HepG2 (cell line): ENCODE measurements at regions of chr20 and their contacts with region 1.

Region 1: DNA sequence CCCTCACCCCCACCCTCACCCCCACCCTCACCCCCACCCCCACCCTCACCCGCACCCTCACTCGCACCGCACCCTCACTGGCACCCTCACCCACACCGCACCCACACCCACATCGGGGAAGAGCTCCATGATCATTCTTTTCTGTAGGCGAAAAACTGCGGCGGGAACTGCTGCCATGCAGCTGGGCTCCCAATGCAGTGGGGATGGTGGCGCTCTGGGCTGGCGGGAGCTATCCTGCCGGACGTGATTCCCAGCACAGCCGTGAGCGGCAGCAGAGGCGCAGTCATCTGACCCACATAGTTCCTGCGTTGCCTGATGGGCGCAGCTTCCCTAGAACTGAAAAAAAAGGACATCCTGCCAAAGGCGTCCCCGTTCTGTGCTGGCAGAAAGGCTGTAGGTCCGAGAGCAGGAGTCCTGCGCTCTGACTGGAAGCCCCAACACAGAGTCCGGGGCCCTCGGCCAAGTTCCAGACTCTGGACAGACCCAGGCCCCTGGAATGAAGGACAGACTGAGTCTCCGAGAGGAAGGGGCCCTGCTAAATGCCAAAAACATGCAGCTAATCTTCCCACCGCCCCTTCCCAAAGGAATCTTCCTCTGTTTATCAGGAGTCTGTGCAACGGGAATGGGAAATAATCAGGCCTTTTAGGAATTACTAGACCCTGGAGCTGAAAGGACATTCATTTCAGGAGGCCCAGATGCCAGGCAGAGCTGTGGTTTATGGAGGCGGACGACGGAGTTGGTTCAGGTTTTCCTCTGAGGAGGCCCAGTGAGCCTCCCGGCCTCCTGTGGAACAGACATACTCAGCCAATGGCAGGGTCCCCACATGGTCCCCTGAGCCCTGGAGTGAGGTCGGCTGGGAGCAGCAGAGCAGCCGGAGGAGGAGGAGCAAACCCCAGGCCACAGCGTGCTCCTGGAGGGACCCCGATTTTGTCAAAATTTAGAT is 14.1 kb upstream of the TCFL5 start:
- DNase-seq: peak; percentile 92
- ATAC-seq: peak; percentile 85
- H3K4me3 ChIP-seq: peak overlapping the region; percentile 8 to 53 (median 13); a peak in 5 of 6 replicates
- H3K27ac ChIP-seq: peak overlapping the region; percentile 48
- H3K4me1 ChIP-seq: peaks cover 67% of the 10 kb centered on the region
- H3K27me3 ChIP-seq: peaks cover 0 to 6% of the 10 kb centered on the region in 2 experiments; a peak in 2 of 5 replicates
- CTCF ChIP-seq: peak; percentile 92
- EP300 ChIP-seq: peak in 1 of 2 experiments; percentile 57; a peak in 1 of 4 replicates
- POLR2A ChIP-seq: peak in 1 of 2 experiments; percentile 59; a peak in 2 of 4 replicates
- RAD21 ChIP-seq: peak; percentile 82

Region 2: DNA sequence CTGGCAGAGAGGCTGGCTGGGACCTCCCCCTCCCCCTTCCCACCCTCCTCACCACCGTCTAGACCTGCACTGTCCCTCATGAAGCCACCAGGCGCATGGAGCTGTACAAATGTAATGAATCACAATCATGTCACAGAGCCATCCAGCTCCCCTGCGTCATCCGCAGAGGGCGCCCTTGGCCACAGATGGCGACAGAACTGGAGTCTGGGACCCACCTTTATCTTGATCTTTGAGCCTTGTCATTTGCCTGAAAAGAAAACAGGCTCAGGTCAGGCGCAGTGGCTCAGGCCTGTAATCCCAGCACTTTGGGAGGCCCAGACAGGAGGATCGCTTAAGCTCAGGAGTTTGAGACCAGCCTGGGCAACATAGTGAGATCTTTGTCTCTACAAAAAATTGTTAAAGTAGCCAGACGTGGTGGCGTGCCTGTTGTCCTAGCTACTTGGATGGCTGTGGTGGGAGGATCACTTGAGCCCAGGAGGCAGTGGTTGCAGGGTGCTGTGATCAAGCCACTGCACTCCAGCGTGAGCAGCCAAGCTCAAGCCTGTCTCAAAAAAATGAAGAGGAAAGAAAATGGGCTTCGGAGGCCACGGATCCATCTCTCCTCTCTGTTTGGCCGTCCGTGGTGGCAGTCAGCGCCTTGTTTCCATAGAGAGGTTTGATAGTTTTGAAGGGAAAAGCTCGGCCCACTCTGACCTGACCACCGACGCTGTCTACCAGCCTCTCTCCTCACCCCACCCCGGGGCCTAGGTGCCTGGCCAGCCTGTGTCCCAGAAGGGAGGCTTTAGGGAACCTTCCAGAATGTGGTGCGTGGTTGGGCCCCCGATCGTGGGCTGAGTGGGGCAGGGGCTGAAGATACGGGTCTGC is 52.7 kb before region 1 on chr20:
- CTCF ChIA-PET with region 1: no interaction called
- POLR2A ChIA-PET with region 1: interaction called, 10 read pairs
- in situ Hi-C with region 1: no loop called
- intact Hi-C with region 1: loop called (anchors 1 kb)
- DNase-seq: peak; percentile 98
- ATAC-seq: peak; percentile 61
- H3K4me3 ChIP-seq: peak overlapping the region in 1 of 3 experiments; percentile 71; a peak in 1 of 6 replicates
- H3K27ac ChIP-seq: peak overlapping the region; percentile 59
- H3K4me1 ChIP-seq: peaks cover 68% of the 10 kb centered on the region
- H3K27me3 ChIP-seq: no peaks in the 10 kb centered on the region
- CTCF ChIP-seq: peak; percentile 99
- EP300 ChIP-seq: peak; percentile 18 to 69; a peak in 3 of 4 replicates
- POLR2A ChIP-seq: 0 out of 4 replicates have a peak, but pooled peaks have one; percentile 3 to 35
- RAD21 ChIP-seq: peak; percentile 98

Region 3: DNA sequence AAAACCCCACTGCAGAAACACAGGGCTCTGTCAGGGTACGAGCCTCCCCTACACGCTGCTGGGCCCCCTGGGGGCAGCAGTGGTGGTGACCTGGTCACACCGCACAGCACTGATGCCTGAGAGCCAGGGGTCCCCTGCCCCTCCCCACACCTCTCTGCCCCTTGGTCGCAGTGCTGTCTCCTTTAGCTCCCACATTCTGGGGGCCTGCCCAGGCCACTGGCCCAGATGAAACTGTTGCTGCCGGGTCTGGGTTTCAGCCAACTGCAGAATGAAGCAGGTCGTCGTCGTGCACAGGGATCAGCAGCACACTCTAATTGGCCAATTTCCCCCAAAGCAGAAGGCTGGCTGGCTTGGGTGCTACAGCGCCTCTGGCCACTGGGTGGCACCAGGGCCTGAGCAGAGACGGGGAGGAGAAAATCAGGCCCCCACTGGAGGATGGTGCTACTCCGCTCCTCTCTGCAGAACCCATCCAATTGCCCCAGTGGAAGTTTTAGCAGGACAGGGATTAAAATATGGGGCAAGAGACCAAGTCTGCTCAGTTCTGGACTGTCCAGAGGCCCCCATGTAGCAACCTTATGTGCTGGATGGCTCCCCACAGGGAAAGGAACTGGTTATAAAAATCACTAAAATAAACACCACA is 24.5 kb after region 1 on chr20:
- CTCF ChIA-PET with region 1: interaction called, 4 read pairs
- POLR2A ChIA-PET with region 1: interaction called, 3 read pairs
- in situ Hi-C with region 1: no loop called
- intact Hi-C with region 1: loop called (anchors 2 kb)
- DNase-seq: peak; percentile 82
- ATAC-seq: peak; percentile 90
- H3K4me3 ChIP-seq: peak overlapping the region in 1 of 3 experiments; percentile 44; a peak in 2 of 6 replicates
- H3K27ac ChIP-seq: peak overlapping the region; percentile 23
- H3K4me1 ChIP-seq: peaks cover 32% of the 10 kb centered on the region
- H3K27me3 ChIP-seq: no peaks in the 10 kb centered on the region
- CTCF ChIP-seq: peak; percentile 98
- EP300 ChIP-seq: 0 out of 4 replicates have a peak, but pooled peaks of 1 of the 2 experiments have one; percentile 2
- POLR2A ChIP-seq: peak in 1 of 2 experiments; percentile 78; a peak in 2 of 4 replicates
- RAD21 ChIP-seq: peak; percentile 95

Region 4: GRCh38 chr20:62937366-62938104 is 61.8 kb after region 1 on chr20:
- CTCF ChIA-PET with region 1: no interaction called
- POLR2A ChIA-PET with region 1: interaction called, 22 read pairs
- in situ Hi-C with region 1: no loop called
- intact Hi-C with region 1: no loop called
- DNase-seq: peak; percentile 94
- ATAC-seq: peak; percentile 86
- H3K4me3 ChIP-seq: peak overlapping the region; percentile 76 to 94 (median 80)
- H3K27ac ChIP-seq: peak overlapping the region; percentile 89
- H3K4me1 ChIP-seq: peaks cover 72% of the 10 kb centered on the region
- H3K27me3 ChIP-seq: no peaks in the 10 kb centered on the region; a peak in 1 of 5 replicates
- CTCF ChIP-seq: peak; percentile 42
- EP300 ChIP-seq: peak in 1 of 2 experiments; percentile 58; a peak in 1 of 4 replicates
- POLR2A ChIP-seq: peak; percentile 94 to 95
- RAD21 ChIP-seq: peak; percentile 53; the same call in 1 of the 2 replicates